ENCODE measurements at regions of chr4 and their contacts with region 1.

Region 1: GRCh38 chr4:120056246-120056645 is 10.4 kb downstream of the MAD2L1 start:
- DNase-seq: no peak
- H3K4me3 ChIP-seq: no peak overlapping the region
- H3K27ac ChIP-seq: no peak overlapping the region
- H3K4me1 ChIP-seq: no peaks in the 10 kb centered on the region
- H3K27me3 ChIP-seq: no peaks in the 10 kb centered on the region
- CTCF ChIP-seq: no peak
- POLR2A ChIP-seq: no peak

Region 2: GRCh38 chr4:119099227-119099801 is 956.9 kb before region 1 on chr4:
- intact Hi-C with region 1: no loop called
- DNase-seq: no peak
- H3K4me3 ChIP-seq: no peak overlapping the region
- H3K27ac ChIP-seq: peak overlapping the region; percentile 9
- H3K4me1 ChIP-seq: peaks cover 32% of the 10 kb centered on the region
- H3K27me3 ChIP-seq: no peaks in the 10 kb centered on the region
- CTCF ChIP-seq: no peak
- POLR2A ChIP-seq: no peak

Region 3: GRCh38 chr4:119314356-119314755 is 741.9 kb before region 1 on chr4:
- intact Hi-C with region 1: loop called (anchors 5 kb)
- DNase-seq: no peak
- H3K4me3 ChIP-seq: no peak overlapping the region
- H3K27ac ChIP-seq: no peak overlapping the region
- H3K4me1 ChIP-seq: no peaks in the 10 kb centered on the region
- H3K27me3 ChIP-seq: no peaks in the 10 kb centered on the region
- CTCF ChIP-seq: peak in 1 of 3 experiments; percentile 12
- POLR2A ChIP-seq: no peak

Region 4: DNA sequence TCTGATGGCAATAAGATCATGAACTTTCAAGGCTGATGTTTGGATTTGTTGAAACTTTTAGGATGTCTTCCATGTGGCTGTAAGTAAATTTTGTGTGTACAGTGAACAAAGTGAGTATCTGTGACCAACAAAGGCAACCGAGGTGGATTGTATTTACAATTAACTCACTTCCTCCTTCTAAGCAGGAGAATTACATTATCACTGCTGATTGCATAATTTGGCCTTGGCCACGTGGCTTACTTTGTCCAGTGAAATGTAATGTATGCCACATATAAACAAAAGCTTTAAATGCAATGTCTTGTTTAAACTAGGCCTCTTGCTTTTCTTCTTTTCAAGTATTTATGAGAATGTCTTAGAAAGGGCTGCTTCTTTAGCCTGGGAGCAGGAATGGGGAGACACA is 76.7 kb after region 1 on chr4:
- intact Hi-C with region 1: no loop called
- DNase-seq: no peak
- H3K4me3 ChIP-seq: no peak overlapping the region
- H3K27ac ChIP-seq: no peak overlapping the region
- H3K4me1 ChIP-seq: no peaks in the 10 kb centered on the region
- H3K27me3 ChIP-seq: no peaks in the 10 kb centered on the region
- CTCF ChIP-seq: no peak
- POLR2A ChIP-seq: no peak

Region 5: DNA sequence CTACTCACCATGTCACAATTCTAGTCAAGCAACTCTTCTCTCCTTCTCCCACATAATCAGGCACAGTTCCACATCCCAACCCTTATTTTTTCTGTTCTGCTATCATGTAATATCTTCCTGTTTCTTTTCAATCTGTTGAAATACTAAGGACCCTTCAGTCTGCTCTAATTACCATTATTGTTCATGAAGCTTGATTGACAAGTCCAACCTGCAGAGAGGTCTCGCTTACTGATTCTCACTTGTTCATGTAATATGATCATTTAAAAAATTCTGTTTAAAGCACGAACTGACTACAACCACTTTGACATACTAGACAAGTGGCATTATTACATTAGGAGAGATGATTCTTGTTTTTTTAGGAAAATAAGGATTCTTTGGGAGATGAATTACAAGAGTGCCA is 119.0 kb after region 1 on chr4:
- intact Hi-C with region 1: no loop called
- DNase-seq: no peak
- H3K4me3 ChIP-seq: no peak overlapping the region
- H3K27ac ChIP-seq: no peak overlapping the region
- H3K4me1 ChIP-seq: no peaks in the 10 kb centered on the region
- H3K27me3 ChIP-seq: no peaks in the 10 kb centered on the region
- CTCF ChIP-seq: no peak
- POLR2A ChIP-seq: no peak

Region 6: DNA sequence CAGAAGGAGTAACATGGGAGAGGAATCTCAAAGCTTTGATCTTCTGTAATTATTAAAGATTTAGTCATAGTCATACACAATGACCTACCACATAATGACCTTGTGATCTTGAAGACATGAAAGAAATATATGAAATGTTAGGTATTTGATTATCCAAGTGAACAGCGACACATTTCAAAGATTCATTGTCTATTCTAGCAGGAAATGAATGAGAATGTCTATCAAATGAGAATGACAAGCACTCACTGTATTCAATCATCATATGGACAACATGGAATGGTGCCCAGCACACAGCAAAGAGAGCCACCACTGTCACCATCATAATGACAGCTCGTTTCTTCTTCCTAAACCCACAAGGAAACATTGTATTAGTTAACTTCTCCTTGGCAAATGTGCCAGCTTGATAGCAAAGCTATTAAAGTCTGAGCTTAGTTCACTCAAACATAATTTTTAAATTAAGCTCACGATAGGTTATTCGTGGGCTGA is 1274.0 kb after region 1 on chr4:
- intact Hi-C with region 1: no loop called
- DNase-seq: no peak
- H3K4me3 ChIP-seq: no peak overlapping the region
- H3K27ac ChIP-seq: no peak overlapping the region
- H3K4me1 ChIP-seq: no peaks in the 10 kb centered on the region
- H3K27me3 ChIP-seq: no peaks in the 10 kb centered on the region
- CTCF ChIP-seq: no peak
- POLR2A ChIP-seq: no peak

Measured in vagina (tissue), 2 donors.